ENCODE measurements at regions of chr15 and their contacts with region 1.

Region 1: GRCh38 chr15:64681424-64682024 is 93.9 kb downstream of the RBPMS2 start:
- DNase-seq: no peak
- H3K4me3 ChIP-seq: no peak overlapping the region
- H3K4me3 Mint-ChIP-seq: no peak overlapping the region
- H3K27ac ChIP-seq: no peak overlapping the region
- H3K27ac Mint-ChIP-seq: peak overlapping the region in 4 of 7 donors; percentile 22 to 68 (median 48)
- H3K4me1 ChIP-seq: no peaks in the 10 kb centered on the region
- H3K4me1 Mint-ChIP-seq: peaks cover 0 to 7% (median 3%) of the 10 kb centered on the region in 4 donors
- H3K27me3 ChIP-seq: no peaks in the 10 kb centered on the region
- H3K27me3 Mint-ChIP-seq: no peaks in the 10 kb centered on the region

Region 2: DNA sequence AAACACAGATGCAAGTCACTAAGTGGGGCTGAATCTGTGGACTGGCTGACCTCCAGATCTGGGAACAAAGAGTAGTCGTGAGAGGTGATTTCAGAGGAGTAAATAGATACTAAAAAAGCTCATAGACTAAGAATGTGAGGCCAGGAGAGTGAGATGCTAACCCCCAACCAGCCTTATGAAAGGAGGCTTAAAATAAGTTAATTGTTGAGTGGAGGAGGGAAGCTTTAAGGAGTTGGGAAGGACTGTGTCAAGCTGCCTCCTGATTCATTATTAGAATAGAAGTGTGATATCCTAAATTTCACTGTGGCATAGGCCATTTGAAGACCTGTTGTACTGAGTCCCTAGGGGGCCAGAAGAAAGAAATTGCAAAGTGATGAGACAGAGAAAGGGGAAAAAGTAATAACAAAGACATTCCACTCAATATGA is 13.8 kb before region 1 on chr15:
- CTCF ChIA-PET with region 1: interaction called, 31 read pairs
- POLR2A ChIA-PET with region 1: no interaction called
- intact Hi-C with region 1: no loop called
- DNase-seq: no peak
- H3K4me3 ChIP-seq: no peak overlapping the region
- H3K4me3 Mint-ChIP-seq: no peak overlapping the region
- H3K27ac ChIP-seq: no peak overlapping the region
- H3K27ac Mint-ChIP-seq: peak overlapping the region in 4 of 7 donors; percentile 0 to 38 (median 8)
- H3K4me1 ChIP-seq: no peaks in the 10 kb centered on the region
- H3K4me1 Mint-ChIP-seq: peaks cover 10 to 20% (median 14%) of the 10 kb centered on the region in 4 donors
- H3K27me3 ChIP-seq: no peaks in the 10 kb centered on the region
- H3K27me3 Mint-ChIP-seq: no peaks in the 10 kb centered on the region

Region 3: DNA sequence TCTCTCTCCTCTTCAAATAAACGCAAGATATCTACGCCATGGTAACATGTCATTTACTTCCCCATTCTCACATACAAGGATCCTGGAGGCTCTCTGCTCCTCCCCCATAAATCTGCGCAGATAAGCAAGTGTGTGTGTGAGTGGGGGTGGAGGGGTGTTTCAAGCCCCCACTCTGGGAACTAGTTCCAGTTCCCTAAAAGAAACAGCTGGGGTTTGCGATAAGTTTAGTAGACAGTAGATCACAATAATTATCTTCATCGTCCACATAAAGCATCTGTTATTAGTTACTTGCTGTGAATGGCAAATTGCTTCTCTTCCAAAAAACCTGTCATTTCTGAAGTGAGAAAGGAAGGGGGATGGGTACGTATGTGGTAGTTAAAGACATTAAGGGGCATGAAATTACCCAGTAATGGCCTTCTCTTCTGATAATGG is 14.1 kb after region 1 on chr15:
- CTCF ChIA-PET with region 1: interaction called, 21 read pairs
- POLR2A ChIA-PET with region 1: interaction called, 4 read pairs
- intact Hi-C with region 1: no loop called
- DNase-seq: no peak
- H3K4me3 ChIP-seq: no peak overlapping the region
- H3K4me3 Mint-ChIP-seq: peak overlapping the region in 1 of 8 donors; percentile 13
- H3K27ac ChIP-seq: no peak overlapping the region
- H3K27ac Mint-ChIP-seq: peak overlapping the region in 4 of 7 donors; percentile 4 to 64 (median 52)
- H3K4me1 ChIP-seq: peaks cover 36% of the 10 kb centered on the region
- H3K4me1 Mint-ChIP-seq: peaks cover 26 to 47% (median 42%) of the 10 kb centered on the region in 4 donors
- H3K27me3 ChIP-seq: no peaks in the 10 kb centered on the region
- H3K27me3 Mint-ChIP-seq: no peaks in the 10 kb centered on the region

Region 4: GRCh38 chr15:64702816-64703646 is 21.5 kb after region 1 on chr15:
- CTCF ChIA-PET with region 1: interaction called, 18 read pairs
- POLR2A ChIA-PET with region 1: interaction called, 4 read pairs
- intact Hi-C with region 1: no loop called
- DNase-seq: peak; percentile 91 to 94 (median 91)
- H3K4me3 ChIP-seq: peak overlapping the region; percentile 54 to 84
- H3K4me3 Mint-ChIP-seq: peak overlapping the region; percentile 79 to 95 (median 92)
- H3K27ac ChIP-seq: peak overlapping the region; percentile 73
- H3K27ac Mint-ChIP-seq: peak overlapping the region; percentile 44 to 95 (median 92)
- H3K4me1 ChIP-seq: peaks cover 52% of the 10 kb centered on the region
- H3K4me1 Mint-ChIP-seq: peaks cover 45 to 59% (median 52%) of the 10 kb centered on the region in 4 donors
- H3K27me3 ChIP-seq: no peaks in the 10 kb centered on the region
- H3K27me3 Mint-ChIP-seq: no peaks in the 10 kb centered on the region

Region 5: DNA sequence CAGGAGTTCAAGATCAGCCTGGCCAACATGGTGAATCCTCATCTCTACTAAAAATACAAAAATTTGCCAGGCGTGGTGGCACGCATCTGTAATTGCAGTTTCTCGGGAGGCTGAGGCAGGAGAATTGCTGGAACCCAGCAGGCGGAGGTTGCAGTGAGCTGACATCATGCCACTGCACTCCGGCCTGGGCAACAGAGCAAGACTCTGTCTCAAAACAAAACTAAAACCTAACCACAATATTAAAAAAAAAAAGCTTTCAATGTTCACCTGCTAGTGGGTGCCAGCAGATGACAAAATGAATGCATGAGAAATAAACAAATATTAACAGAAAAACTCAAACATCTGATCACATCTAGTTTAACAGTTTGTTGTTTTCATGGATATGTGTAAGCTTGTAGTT is 949.2 kb after region 1 on chr15:
- CTCF ChIA-PET with region 1: no interaction called
- POLR2A ChIA-PET with region 1: no interaction called
- intact Hi-C with region 1: no loop called
- DNase-seq: no peak
- H3K4me3 ChIP-seq: no peak overlapping the region
- H3K4me3 Mint-ChIP-seq: peak overlapping the region in 1 of 8 donors; percentile 82
- H3K27ac ChIP-seq: no peak overlapping the region
- H3K27ac Mint-ChIP-seq: no peak overlapping the region
- H3K4me1 ChIP-seq: peaks cover 16% of the 10 kb centered on the region
- H3K4me1 Mint-ChIP-seq: peaks cover 7 to 12% (median 8%) of the 10 kb centered on the region in 4 donors
- H3K27me3 ChIP-seq: no peaks in the 10 kb centered on the region
- H3K27me3 Mint-ChIP-seq: no peaks in the 10 kb centered on the region

Measured in CD4-positive, alpha-beta memory T cell (primary cell).